GM23248 (cell line): ENCODE measurements at regions of chr7 and their contacts with region 1.

Region 1: DNA sequence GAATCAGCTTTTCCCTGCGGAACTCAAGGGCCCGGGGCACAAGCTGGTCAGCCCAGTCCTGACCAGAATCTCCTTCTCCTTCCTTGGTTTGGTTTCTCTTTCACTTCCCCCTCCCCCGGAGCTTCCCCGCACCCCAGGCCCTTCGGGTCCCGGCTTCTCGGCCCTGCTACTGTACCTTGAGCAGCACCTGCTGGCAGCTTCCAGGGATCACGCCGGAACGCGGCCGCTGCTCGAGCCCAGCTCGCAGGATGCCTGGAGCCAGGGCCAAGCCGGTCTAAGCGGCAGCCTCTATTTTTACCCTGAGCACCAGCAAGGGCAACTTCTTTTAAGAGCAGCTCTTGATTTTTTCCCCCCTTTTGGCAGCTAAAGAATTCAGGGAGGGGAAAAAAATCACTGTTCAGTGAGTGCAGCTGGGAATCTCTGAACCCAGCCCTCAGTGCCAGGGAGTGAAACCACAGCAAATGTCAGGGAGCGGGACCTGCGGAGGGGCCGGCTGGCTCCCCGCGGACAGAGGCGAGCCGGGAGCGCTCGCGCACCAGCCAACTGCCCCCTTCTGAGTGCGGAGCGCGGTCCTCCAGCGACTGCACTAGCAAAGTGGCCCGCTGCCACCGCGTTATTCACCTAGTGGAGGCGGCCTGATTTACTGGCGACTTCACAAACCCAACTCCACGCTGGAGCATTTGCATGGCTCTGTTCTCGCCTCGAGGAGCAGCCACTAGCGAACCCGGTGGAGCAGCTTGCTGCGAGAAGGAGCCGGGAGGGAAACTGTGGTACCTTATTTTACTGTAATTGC is 2.4 kb upstream of the INHBA start:
- DNase-seq: peak; percentile 95
- H3K4me3 ChIP-seq: peak overlapping the region; percentile 74
- H3K27ac ChIP-seq: peak overlapping the region; percentile 59
- H3K4me1 ChIP-seq: peaks cover 31% of the 10 kb centered on the region
- H3K27me3 ChIP-seq: no peaks in the 10 kb centered on the region

Region 2: GRCh38 chr7:40232242-40232893 is 1472.9 kb before region 1 on chr7:
- in situ Hi-C with region 1: loop called (anchors 25 kb)
- DNase-seq: peak; percentile 82
- H3K4me3 ChIP-seq: no peak overlapping the region
- H3K27ac ChIP-seq: no peak overlapping the region
- H3K4me1 ChIP-seq: no peaks in the 10 kb centered on the region
- H3K27me3 ChIP-seq: no peaks in the 10 kb centered on the region

Region 3: DNA sequence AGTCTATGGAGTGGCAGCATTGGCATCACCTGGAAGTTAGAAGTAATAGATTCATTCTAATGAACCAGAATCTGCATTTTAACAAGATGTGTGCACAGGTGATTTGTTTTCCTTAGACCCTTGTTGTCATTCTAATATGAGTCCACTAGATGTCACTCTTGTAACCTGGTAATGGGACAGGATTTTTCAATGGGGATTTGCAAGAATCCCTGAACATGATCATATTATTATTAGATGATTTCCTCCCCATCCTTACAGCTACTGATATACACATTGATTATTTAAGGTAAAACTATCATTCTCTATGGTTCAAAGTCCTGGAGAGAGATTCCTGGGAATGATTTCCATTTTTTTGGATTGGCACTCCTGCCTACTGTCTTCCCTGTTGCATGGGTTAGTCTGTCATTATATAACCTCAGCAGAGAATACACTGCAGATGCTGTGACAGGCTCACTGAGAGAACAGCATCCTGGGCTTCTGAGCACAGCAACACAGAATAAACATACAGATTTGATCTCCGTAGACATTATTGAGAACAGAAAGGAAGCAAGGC is 1375.6 kb before region 1 on chr7:
- in situ Hi-C with region 1: loop called (anchors 10 kb)
- DNase-seq: peak; percentile 67
- H3K4me3 ChIP-seq: no peak overlapping the region
- H3K27ac ChIP-seq: no peak overlapping the region
- H3K4me1 ChIP-seq: peaks cover 12% of the 10 kb centered on the region
- H3K27me3 ChIP-seq: no peaks in the 10 kb centered on the region

Region 4: DNA sequence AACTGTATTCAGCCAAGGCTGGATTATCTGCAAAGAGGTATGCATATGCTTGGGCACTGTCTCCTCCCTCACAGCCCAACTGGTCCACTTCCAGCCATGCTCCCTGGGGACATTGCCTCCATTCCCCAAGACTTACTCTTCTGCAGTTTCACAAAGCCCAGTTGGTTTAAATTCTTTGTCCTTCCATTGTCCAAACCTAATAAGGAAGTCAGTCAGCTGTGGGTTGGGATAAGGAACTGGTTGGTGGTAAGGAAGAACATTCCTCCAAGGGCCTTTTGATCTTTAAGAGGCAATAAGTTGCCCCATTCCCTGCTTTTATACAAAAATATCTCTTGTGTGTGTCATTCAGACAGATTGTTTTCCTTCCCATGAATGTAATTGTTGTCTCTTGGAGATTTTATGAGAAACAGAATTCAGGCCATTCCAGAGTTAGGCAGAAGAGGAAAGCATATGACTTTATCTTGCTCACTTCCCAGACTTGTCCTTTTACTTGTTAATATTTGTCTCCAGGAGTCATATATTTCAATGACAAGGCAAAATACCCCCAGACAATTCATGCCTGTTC is 896.8 kb before region 1 on chr7:
- in situ Hi-C with region 1: loop called (anchors 25 kb)
- DNase-seq: peak; percentile 97
- H3K4me3 ChIP-seq: 0 out of 2 replicates have a peak overlapping the region, but pooled peaks have one; percentile 8
- H3K27ac ChIP-seq: peak overlapping the region; percentile 95
- H3K4me1 ChIP-seq: peaks cover 60% of the 10 kb centered on the region
- H3K27me3 ChIP-seq: no peaks in the 10 kb centered on the region

Region 5: GRCh38 chr7:41277561-41277960 is 427.7 kb before region 1 on chr7:
- in situ Hi-C with region 1: no loop called
- DNase-seq: no peak
- H3K4me3 ChIP-seq: no peak overlapping the region
- H3K27ac ChIP-seq: no peak overlapping the region
- H3K4me1 ChIP-seq: no peaks in the 10 kb centered on the region
- H3K27me3 ChIP-seq: 0 out of 2 replicates have a peak, but pooled peaks cover 4% of the 10 kb centered on the region